ENCODE measurements at regions of chr1 and their contacts with region 1.

Region 1: GRCh38 chr1:155277070-155277895 is at the start of gene HCN3:
- DNase-seq: peak; percentile 97 to 99
- ATAC-seq: peak; percentile 85 to 91 (median 90)
- H3K4me3 ChIP-seq: peak within 1 kb of the TSS; percentile 86
- H3K27ac ChIP-seq: peak within 1 kb of the TSS; percentile 39
- H3K4me1 ChIP-seq: peaks cover 19% of the 10 kb centered on the region
- H3K27me3 ChIP-seq: no peaks in the 10 kb centered on the region
- CTCF ChIP-seq: peak; percentile 64
- total RNA-seq, gene HCN3: 0.27 to 0.82 (median 0.32) TPM in 3 of 4 donors, not detected in the other

Region 2: DNA sequence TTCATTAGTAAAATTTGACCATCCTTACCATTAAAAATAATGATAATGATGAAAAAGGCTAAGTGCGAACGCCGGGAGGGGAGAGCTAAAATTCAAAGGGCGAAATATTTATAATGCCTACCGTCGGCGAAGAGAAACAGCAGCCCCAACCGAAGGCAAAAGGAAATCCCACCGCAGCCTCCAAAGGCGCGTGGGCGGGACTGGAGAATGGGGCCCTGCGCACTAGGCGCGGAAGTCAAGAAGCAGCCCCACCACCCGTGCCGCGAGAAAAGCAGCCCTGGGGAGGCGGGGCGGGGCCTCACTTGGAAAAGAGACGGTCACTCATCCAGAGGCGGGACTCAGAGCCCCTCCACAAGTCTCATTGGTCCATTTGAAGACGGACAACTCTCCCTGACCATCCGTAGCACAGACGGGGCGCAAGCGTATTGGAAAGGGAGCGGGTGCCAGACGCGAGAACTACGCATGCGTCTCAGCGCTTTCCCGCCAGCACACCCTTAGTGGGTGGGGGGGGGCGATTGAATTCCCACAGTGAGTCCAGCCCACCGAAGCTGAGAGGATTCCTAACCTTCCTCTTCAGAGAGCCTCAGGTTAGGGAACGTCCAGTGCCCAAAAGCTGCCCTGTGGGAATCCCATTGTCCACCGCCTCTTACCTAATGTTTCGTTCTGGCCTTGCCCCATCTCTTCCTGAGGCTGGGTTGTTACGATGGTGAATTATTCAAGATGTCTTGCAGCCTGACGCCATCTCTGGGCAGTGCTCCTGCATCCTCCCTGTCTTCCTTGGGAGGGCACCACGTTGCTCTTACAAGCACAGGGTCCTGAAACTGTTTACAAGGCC is 49.8 kb before region 1 on chr1:
- intact Hi-C with region 1: no loop called
- DNase-seq: peak; percentile 98
- ATAC-seq: peak; percentile 98 to 99 (median 98)
- H3K4me3 ChIP-seq: peak overlapping the region; percentile 79
- H3K27ac ChIP-seq: peak overlapping the region; percentile 84
- H3K4me1 ChIP-seq: no peaks in the 10 kb centered on the region
- H3K27me3 ChIP-seq: no peaks in the 10 kb centered on the region
- CTCF ChIP-seq: no peak

Region 3: GRCh38 chr1:155308493-155309422 is 31.5 kb after region 1 on chr1 and contains the start of gene FDPS:
- intact Hi-C with region 1: loop called in 1 of 2 experiments (anchors 5 kb)
- DNase-seq: peak; percentile 99
- ATAC-seq: peak; percentile 99 to 100 (median 100)
- H3K4me3 ChIP-seq: peak within 1 kb of the TSS; percentile 81
- H3K27ac ChIP-seq: peak within 1 kb of the TSS; percentile 87
- H3K4me1 ChIP-seq: peaks cover 9% of the 10 kb centered on the region
- H3K27me3 ChIP-seq: no peaks in the 10 kb centered on the region
- CTCF ChIP-seq: no peak
- total RNA-seq, gene FDPS: 46.2 to 60.8 (median 48.8) TPM

Measured in psoas muscle (tissue), 8 donors.